IMR-90 (cell line): ENCODE measurements at regions of chr6 and their contacts with region 1.

Region 1: GRCh38 chr6:113031591-113032238 is 684.6 kb downstream of the RFPL4B start:
- DNase-seq: no peak
- ATAC-seq: no peak
- H3K4me3 ChIP-seq: no peak overlapping the region
- H3K27ac ChIP-seq: no peak overlapping the region
- H3K4me1 ChIP-seq: no peaks in the 10 kb centered on the region
- H3K27me3 ChIP-seq: no peaks in the 10 kb centered on the region
- CTCF ChIP-seq: no peak
- POLR2A ChIP-seq: no peak
- RAD21 ChIP-seq: no peak

Region 2: DNA sequence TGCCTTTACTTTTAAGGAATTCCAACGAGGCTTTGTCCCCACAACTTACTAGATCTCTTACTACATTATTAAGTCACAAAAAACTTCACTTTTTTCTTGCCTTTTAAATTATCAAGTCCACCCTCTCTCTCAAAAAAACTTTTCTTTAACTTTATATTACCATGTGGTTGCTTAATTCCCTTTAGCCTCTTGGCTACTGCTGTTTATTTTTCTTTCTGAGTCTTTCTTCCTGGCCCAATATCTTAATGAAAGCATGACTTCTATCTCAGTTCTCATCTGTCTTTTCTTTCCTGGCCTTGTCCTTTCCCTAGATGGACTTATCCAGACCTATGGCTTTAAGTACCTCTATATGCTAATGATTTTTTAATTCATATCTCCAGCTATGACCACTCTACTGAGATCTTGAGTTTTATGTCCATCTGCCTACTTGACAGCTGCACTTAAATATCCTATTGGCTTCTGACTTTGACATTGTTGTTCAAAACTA is 25.9 kb after region 1 on chr6:
- CTCF ChIA-PET with region 1: no interaction called
- POLR2A ChIA-PET with region 1: no interaction called
- dilution Hi-C with region 1: no loop called
- in situ Hi-C with region 1: no loop called
- intact Hi-C with region 1: loop called (anchors 2 kb)
- DNase-seq: peak; percentile 50
- ATAC-seq: peak; percentile 69
- H3K4me3 ChIP-seq: no peak overlapping the region
- H3K27ac ChIP-seq: no peak overlapping the region
- H3K4me1 ChIP-seq: 0 out of 2 replicates have a peak, but pooled peaks cover 2% of the 10 kb centered on the region
- H3K27me3 ChIP-seq: no peaks in the 10 kb centered on the region
- CTCF ChIP-seq: no peak
- POLR2A ChIP-seq: no peak
- RAD21 ChIP-seq: no peak